PC-3 (cell line): ENCODE measurements at regions of chr6 and their contacts with region 1.

Region 1: DNA sequence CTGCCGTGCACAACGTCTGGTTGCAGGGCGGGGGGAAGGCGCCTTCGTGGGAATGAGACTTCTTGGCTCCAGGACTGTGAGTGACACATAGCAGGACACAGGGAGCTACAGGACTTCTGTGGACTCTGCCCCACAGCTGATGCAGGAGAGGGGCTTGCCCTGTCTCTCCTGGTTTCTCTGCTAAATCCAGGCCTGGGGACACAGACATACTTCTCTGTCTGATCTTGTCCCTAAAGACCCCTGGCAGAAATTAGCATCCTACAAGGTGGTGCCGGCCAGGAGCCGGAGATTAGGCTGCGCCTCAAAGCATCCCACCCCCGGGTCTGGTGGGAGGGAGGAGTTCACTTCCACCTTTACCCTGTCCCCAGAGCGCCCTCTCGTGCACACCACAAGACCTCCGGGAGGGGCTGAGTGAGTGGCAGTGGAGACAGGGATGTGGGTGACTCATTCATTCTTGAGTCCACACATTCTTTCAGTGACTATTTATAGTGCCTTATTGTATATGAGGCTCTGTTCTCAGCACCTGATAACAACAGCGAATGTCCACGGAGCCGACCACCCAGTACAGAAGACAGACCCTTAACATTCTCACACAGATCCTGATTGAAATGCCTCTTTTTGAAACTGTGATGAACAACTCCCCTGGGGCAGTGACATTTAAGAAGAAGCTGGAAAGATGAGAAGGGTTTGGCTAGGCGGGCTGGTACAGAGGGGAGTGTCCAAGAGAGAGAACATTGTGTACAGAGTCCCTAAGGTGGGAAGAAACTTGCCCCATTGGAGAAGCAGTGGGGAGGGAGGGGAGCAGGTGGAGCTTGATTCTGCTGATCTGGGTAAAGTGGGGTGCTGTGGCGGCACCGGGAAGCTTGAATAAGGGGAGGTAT is 39.0 kb downstream of the GMPR start:
- DNase-seq: peak; percentile 96
- ATAC-seq: peak; percentile 98
- H3K4me3 ChIP-seq: peak overlapping the region; percentile 37; the same call in 1 of the 2 replicates
- H3K27ac ChIP-seq: peak overlapping the region; percentile 53
- H3K4me1 ChIP-seq: peaks cover 18% of the 10 kb centered on the region
- H3K27me3 ChIP-seq: no peaks in the 10 kb centered on the region
- CTCF ChIP-seq: peak; percentile 92

Region 2: GRCh38 chr6:16228709-16229665 is 48.4 kb before region 1 on chr6:
- CTCF ChIA-PET with region 1: interaction called, 4 read pairs
- POLR2A ChIA-PET with region 1: no interaction called
- intact Hi-C with region 1: loop called (anchors 10 kb)
- DNase-seq: peak; percentile 35
- ATAC-seq: peak; percentile 87
- H3K4me3 ChIP-seq: peak overlapping the region; percentile 60
- H3K27ac ChIP-seq: no peak overlapping the region
- H3K4me1 ChIP-seq: peaks cover 5% of the 10 kb centered on the region; the same call in 1 of the 2 replicates
- H3K27me3 ChIP-seq: no peaks in the 10 kb centered on the region
- CTCF ChIP-seq: peak; percentile 39; the same call in 1 of the 2 replicates

Region 3: DNA sequence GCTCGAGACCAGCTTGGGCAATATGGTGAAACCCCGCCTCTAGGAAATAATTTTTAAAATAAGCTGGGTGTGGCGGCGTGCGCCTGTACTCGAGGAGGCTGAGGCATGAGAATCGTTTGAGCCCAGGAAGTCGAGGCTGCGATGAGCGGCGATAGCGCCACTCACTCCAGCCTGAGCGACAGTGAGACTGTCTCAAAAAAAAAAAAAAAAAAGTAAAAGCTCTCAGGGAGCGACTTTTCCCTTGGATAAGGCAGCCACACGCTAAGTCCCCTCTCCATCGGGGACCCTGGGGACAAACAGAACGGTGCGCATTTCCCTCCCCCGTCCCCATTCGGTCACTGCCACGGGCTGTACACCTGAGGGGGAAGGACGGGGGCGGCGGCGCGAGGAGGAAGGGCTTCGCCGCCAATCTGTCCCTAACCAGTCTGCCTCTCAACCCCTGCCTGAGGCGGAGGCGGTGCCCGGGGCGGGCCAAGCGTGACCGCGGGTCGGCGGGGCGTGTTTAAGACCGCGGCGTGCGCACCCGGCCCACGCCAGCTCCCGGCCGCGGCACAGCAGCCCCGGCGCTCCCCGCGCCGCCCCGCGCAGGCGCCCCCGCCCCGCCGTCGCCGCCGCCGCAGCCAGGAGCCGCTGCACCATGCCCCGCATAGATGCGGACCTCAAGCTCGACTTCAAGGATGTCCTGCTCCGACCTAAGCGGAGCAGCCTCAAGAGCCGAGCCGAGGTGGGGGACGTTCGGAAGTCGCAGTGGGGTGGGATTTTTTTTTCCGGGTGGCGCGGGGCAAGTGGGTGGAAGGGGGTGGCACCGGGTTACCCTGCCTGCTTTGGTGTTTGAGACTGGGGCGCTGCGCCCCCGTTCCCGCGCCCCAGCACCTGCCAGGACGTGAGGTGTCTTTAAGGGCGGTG is 39.0 kb before region 1 on chr6 and contains the start of gene GMPR:
- CTCF ChIA-PET with region 1: interaction called, 4 read pairs
- POLR2A ChIA-PET with region 1: no interaction called
- intact Hi-C with region 1: loop called (anchors 1 kb)
- DNase-seq: peak; percentile 59
- ATAC-seq: peak; percentile 43
- H3K4me3 ChIP-seq: peak within 1 kb of the TSS; percentile 92
- H3K27ac ChIP-seq: no peak within 1 kb of the TSS
- H3K4me1 ChIP-seq: peaks cover 17% of the 10 kb centered on the region
- H3K27me3 ChIP-seq: 0 out of 2 replicates have a peak, but pooled peaks cover 5% of the 10 kb centered on the region
- CTCF ChIP-seq: no peak
- total RNA-seq, gene GMPR: 5.0 and 5.8 TPM in 2 replicates

Region 4: DNA sequence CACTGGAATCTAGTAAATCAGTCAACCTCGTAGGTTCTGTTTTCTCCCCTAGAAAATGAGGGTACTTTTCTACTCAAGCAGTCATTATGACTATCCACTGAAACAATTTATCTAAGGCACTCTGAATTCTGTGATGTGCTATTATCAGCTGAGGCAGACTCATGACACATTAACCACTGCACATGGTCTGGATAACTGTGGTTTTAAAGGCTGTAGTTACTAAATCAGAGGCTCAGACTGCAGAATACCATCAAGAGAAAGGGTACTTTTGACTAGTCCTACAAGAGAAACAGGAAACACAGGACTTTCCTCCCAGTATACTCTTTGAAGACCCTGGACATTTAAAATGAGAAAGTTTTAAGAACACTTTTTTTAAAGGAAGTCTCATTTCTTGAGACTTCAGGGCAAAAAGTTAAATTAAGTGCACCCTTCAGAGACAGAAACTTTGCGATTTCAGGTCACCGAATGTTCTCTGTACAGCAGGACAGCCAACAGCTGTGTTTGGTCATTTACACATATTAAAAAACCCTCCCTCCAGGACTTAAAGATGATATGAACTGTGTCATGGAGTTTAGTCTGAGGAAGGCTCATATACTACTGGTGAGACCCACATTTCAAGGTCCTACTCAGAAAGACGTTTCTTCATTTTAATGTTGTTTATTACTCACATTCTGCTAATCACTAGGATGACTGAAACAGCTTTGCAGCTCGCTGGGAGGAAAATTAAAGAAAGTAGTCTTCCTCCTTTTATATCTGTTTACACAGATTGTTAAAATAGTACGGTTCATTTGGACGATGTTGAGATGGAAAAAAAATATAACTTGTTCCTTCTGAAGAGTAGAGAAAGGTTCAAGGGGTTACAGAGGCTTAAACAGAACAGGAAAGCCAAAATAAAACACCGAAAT is 464.0 kb after region 1 on chr6:
- CTCF ChIA-PET with region 1: no interaction called
- POLR2A ChIA-PET with region 1: no interaction called
- intact Hi-C with region 1: no loop called
- DNase-seq: peak; percentile 78
- ATAC-seq: peak; percentile 36
- H3K4me3 ChIP-seq: no peak overlapping the region
- H3K27ac ChIP-seq: peak overlapping the region; percentile 12
- H3K4me1 ChIP-seq: peaks cover 49% of the 10 kb centered on the region
- H3K27me3 ChIP-seq: no peaks in the 10 kb centered on the region
- CTCF ChIP-seq: no peak